ENCODE measurements at regions of chr11 and their contacts with region 1.

Region 1: DNA sequence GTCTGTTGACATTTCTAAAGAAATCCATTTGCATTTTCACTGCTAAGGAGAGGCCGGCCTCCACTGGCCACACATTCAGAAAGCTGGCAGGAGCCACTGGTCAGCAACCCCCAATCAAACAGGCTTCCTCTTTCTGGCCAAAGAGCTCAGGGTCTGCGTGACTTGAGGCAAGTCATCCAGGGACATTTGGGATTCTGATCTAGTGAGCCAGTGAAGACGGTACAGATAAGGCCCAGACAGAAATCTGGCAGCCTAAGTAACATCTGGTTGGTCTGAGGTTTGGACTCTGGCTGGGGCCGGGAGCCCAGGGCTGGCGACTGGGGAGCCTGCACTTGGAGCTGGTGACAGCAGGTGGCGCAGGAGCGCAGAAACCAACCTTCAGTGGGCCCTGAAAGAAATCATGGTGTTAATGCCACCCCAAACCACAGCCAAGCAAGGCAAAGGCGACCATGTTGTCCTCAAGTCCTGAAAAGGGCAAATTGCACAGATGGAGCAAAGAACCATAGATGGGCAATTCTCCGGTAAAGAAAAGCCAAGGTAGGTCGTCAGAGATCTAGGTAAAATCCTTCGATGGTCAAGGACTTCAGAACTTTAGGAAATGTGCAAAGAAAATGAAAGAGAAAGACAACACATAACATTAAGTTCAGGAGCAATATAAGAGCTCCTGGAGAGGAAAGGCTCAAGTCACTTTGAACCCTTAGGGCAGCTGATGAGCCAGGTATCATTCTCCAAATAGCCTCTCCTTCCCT is 99.4 kb upstream of the BLID start:
- DNase-seq: peak; percentile 64
- CTCF ChIP-seq: peak; percentile 85

Region 2: DNA sequence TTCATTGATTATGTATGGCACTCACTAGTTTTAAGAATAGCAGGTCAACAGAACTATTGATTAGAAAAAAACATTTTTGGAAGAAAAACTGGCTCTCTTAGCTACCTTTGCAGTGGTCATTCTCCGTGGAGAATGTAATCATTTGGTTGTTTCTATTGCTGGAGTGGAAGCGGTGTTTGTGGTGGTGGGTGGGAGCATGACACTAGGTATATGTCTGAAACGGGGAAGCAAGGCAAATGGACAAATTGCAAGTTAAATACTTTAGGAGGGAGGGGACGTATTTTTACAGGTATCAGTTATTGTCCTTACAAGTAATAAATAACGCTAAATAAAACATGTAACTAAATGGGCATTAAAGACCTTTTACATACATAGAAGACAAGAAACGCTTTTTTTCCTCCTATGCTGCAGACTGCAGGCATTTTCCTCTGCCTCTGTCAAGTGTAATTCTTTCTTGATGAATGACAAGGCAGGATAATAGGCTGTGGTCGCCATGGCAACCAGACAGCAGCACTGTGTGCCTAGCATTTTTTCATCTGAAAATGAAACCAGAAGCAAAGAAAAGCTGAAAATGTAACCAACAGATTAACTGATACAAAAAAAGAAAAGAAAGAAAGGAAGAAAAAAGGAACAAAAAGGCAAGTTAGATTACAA is 145.6 kb before region 1 on chr11:
- CTCF ChIA-PET with region 1: no interaction called
- POLR2A ChIA-PET with region 1: no interaction called
- DNase-seq: peak; percentile 10
- CTCF ChIP-seq: no peak

Region 3: DNA sequence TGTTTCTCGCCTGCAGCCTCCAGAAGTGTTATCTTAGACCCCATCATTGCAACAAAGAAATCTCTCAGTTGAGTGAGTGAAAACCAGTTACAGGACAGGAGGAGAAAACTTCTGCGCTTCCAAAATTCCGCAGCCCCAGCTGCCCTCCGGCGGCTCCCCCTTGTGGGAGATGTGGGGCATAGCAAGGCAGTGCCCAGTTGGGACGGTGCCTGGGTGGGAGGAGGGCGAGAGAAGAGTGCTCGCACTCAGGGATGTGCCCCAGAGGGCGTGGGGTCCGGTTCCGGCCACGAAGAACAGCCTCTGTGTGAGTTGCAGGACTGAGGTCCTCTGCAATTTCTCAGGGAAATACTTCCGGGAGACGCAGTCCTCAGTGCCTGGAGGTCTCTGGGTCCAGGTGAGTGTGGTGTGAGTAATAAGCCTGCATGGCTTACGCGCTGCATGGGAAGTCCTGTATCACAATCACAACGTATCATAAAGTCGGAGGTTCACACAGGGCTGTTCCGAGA is 12.4 kb before region 1 on chr11:
- CTCF ChIA-PET with region 1: interaction called, 37 read pairs
- POLR2A ChIA-PET with region 1: no interaction called
- DNase-seq: peak; percentile 75
- CTCF ChIP-seq: peak; percentile 81

Region 4: DNA sequence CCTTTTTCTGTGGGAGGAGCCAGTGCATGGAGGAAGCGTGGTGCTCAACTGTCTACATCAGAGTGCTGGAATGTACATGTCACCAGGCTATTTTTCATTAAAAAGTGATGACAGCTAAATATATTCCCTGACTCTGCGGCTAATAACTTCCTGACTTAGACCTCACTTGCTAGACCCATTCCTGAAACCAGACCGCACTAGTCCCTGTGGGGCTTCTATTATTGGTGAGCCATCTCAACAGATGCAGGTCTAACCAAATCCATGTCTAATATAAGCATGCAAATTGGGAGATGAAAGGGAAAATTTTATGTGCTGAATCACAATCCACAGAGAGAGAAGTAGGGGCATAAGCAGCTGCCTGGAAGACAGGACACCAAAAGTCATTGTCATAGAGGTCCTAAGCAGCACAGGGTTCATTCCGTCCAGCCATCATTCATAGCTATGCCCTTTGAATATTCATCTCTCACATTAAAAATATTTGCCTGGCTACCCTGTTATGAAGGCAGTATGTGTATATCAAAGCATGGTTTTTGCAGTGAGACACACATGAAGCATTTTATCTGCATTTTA is 11.5 kb after region 1 on chr11:
- CTCF ChIA-PET with region 1: interaction called, 21 read pairs
- POLR2A ChIA-PET with region 1: no interaction called
- DNase-seq: no peak
- CTCF ChIP-seq: no peak

Region 5: DNA sequence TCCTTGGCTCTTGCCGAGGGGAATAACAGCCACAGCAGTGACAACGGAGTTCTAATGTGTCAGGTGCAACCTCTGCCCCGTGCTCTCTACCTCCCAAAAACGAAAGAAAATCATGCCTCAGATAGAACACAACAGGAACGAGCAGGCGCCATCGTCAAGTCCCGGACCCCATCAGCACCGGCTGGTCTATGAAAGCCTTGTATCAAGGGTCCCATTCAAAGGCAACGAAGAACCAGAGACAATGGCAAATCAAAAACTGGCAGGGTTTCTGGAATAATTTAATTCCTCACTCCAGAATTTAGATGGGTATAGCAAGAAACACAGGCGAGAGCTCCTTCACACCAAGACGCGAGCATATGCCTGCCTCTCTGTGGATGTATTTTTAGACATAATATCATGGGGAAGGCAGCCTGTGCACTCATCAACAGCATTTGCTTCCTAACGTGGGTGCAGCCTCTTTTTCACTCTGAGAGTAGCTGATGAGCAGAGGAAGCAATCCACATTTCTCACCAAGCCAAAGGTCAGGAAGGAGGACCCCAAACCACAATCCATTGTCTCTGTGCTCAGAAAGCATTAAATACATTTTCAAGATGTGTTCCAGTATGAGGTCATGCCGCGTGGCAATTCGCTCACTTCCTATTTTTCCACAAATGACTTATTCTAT is 94.0 kb after region 1 on chr11:
- CTCF ChIA-PET with region 1: no interaction called
- POLR2A ChIA-PET with region 1: no interaction called
- DNase-seq: no peak
- CTCF ChIP-seq: no peak

Region 6: DNA sequence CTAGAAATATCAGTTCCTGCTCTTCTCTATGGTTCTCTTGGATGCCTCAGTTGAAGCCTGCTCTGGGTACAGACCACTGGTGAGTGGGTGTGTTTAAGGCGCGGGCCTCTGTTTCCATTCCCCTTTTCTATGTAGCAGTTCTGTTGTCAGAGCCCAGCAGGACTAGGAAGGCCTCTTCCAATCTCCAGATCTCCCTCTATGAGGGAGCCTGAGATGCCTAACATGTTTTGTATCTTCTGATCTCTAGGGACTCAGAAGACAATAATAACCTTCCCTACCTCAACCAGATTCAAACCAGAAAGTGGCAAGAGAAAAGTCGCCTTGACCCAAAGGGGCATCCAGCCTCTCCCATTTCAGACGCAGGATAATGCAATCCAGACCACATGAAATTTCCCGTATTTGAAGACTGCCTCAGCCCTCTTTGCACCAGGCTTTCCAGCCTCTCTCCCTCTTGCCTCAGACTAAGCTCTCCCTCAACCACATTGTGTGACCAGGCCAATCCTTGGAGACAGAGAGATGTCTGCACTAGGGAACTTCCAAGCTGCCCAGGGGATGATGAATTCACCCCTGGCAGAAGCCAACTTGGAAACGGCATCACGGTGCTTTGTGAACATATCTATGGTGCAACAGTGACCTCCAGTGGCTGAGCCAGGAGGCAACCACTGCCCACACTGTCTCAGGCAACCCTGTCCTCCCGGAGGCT is 290.0 kb after region 1 on chr11:
- CTCF ChIA-PET with region 1: interaction called, 87 read pairs
- POLR2A ChIA-PET with region 1: no interaction called
- DNase-seq: peak; percentile 57
- CTCF ChIP-seq: peak; percentile 81